Endothelial cell of umbilical vein (primary cell): ENCODE measurements at regions of chr7 and their contacts with region 1.

Region 1: GRCh38 chr7:6516387-6516983 is 34.8 kb downstream of the GRID2IP start:
- DNase-seq: peak; percentile 71
- H3K4me3 ChIP-seq: no peak overlapping the region
- H3K27ac ChIP-seq: no peak overlapping the region
- H3K4me1 ChIP-seq: no peaks in the 10 kb centered on the region
- H3K27me3 ChIP-seq: no peaks in the 10 kb centered on the region
- CTCF ChIP-seq: peak; percentile 77 to 87
- POLR2A ChIP-seq: no peak

Region 2: GRCh38 chr7:6558837-6559236 is 42.4 kb after region 1 on chr7:
- CTCF ChIA-PET with region 1: interaction called, 23 read pairs
- POLR2A ChIA-PET with region 1: no interaction called
- dilution Hi-C with region 1: no loop called
- intact Hi-C with region 1: no loop called
- DNase-seq: no peak
- H3K4me3 ChIP-seq: no peak overlapping the region
- H3K27ac ChIP-seq: no peak overlapping the region
- H3K4me1 ChIP-seq: no peaks in the 10 kb centered on the region
- H3K27me3 ChIP-seq: no peaks in the 10 kb centered on the region
- CTCF ChIP-seq: peak in 1 of 2 donors; percentile 8
- POLR2A ChIP-seq: no peak

Region 3: DNA sequence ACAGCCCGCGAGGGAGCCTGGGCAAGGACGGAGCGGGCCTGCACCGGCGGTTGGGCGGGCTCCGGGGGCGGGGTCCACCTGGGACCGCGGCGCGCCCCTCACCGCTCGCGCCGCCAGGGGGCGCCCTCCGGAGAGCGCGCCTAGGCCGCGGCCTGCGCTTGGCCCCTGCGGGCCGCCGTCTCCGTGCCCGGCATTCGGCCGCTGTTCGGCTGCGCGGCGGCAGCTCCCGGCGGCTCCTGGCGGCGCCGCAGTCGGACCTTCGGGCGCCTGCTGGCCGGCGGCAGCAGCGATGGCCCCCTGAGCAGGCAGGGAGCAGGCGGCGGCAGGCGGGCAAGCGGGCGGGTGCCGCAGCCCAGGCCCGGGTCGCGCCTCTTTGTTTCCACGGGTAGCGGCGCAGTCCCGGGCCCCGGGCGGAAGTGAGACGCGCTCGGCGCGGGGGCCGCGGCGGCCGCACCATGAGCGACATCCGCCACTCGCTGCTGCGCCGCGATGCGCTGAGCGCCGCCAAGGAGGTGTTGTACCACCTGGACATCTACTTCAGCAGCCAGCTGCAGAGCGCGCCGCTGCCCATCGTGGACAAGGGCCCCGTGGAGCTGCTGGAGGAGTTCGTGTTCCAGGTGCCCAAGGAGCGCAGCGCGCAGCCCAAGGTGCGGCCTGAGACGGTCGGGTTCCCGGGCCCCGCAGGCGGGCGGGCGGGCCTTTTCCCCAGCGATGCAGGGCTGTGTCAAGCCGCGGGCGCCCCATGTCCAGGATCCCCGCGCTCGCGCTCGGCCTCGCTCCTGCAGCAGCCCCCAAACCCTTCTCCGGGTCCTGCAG is 73.6 kb after region 1 on chr7 and contains the start of gene INTS15:
- CTCF ChIA-PET with region 1: interaction called, 10 read pairs
- POLR2A ChIA-PET with region 1: no interaction called
- dilution Hi-C with region 1: no loop called
- intact Hi-C with region 1: loop called (anchors 2 kb)
- DNase-seq: peak; percentile 70
- H3K4me3 ChIP-seq: peak within 1 kb of the TSS; percentile 66 to 96 (median 70)
- H3K27ac ChIP-seq: peak within 1 kb of the TSS; percentile 60
- H3K4me1 ChIP-seq: peaks cover 12% of the 10 kb centered on the region
- H3K27me3 ChIP-seq: no peaks in the 10 kb centered on the region
- CTCF ChIP-seq: peak; percentile 57 to 86
- POLR2A ChIP-seq: peak; percentile 94
- total RNA-seq, gene INTS15: 31.5 and 35.7 TPM in 2 replicates